Right ventricle myocardium superior (tissue), 1 donor: ENCODE measurements at regions of chr3 and their contacts with region 1.

Region 1: GRCh38 chr3:59857589-59858346 is 807.9 kb upstream of the CFAP20DC start:
- DNase-seq: peak; percentile 85
- ATAC-seq: peak; percentile 99

Region 2: GRCh38 chr3:59212128-59212779 is 645.5 kb before region 1 on chr3:
- intact Hi-C with region 1: loop called (anchors 5 kb)
- DNase-seq: no peak
- ATAC-seq: peak; percentile 89

Region 3: GRCh38 chr3:59575113-59576001 is 282.4 kb before region 1 on chr3:
- intact Hi-C with region 1: loop called (anchors 2 kb)
- DNase-seq: peak; percentile 92
- ATAC-seq: peak; percentile 92

Region 4: GRCh38 chr3:60250206-60250605 is 392.4 kb after region 1 on chr3:
- intact Hi-C with region 1: no loop called
- DNase-seq: no peak
- ATAC-seq: no peak